Esophagus muscularis mucosa (tissue), 4 donors: ENCODE measurements at regions of chrX and their contacts with region 1.

Region 1: DNA sequence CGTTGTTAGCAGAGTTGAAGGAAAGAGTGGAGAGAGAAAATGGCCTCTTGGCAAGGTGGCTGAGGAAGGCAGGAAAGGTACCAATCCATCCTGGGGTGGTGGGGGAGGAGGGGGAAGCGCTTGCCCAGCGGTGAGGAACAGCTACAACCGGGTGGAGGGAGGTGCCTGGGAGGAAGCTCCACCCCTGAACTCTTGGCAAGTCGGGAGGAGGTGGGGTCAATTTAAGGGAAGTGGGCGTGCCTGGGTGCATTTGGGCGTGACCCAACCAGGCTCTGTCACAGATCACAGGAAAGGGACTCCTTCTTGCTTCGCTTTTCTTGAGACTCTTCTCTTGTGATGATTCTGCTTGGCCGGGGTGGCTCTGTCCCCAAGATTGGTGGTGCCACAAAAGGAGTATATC is 41.7 kb downstream of the BCORL1 start:
- DNase-seq: peak; percentile 92
- H3K4me3 ChIP-seq: no peak overlapping the region
- H3K27ac ChIP-seq: peak overlapping the region in 2 of 4 donors; percentile 18 to 34
- H3K4me1 ChIP-seq: peaks cover 4 to 20% (median 17%) of the 10 kb centered on the region in 4 donors
- H3K27me3 ChIP-seq: no peaks in the 10 kb centered on the region
- CTCF ChIP-seq: no peak
- EP300 ChIP-seq: no peak
- POLR2A ChIP-seq: no peak

Region 2: GRCh38 chrX:129925305-129926092 is 98.6 kb before region 1 on chrX:
- intact Hi-C with region 1: loop called (anchors 10 kb)
- DNase-seq: no peak
- H3K4me3 ChIP-seq: no peak overlapping the region
- H3K27ac ChIP-seq: no peak overlapping the region
- H3K4me1 ChIP-seq: peaks cover 0 to 5% (median 2%) of the 10 kb centered on the region in 4 donors
- H3K27me3 ChIP-seq: no peaks in the 10 kb centered on the region
- CTCF ChIP-seq: peak; percentile 54 to 61 (median 58)
- EP300 ChIP-seq: no peak
- POLR2A ChIP-seq: no peak

Region 3: GRCh38 chrX:129945146-129945545 is 79.0 kb before region 1 on chrX:
- intact Hi-C with region 1: no loop called
- DNase-seq: no peak
- H3K4me3 ChIP-seq: no peak overlapping the region
- H3K27ac ChIP-seq: no peak overlapping the region
- H3K4me1 ChIP-seq: no peaks in the 10 kb centered on the region
- H3K27me3 ChIP-seq: no peaks in the 10 kb centered on the region
- CTCF ChIP-seq: no peak
- EP300 ChIP-seq: no peak
- POLR2A ChIP-seq: no peak

Region 4: DNA sequence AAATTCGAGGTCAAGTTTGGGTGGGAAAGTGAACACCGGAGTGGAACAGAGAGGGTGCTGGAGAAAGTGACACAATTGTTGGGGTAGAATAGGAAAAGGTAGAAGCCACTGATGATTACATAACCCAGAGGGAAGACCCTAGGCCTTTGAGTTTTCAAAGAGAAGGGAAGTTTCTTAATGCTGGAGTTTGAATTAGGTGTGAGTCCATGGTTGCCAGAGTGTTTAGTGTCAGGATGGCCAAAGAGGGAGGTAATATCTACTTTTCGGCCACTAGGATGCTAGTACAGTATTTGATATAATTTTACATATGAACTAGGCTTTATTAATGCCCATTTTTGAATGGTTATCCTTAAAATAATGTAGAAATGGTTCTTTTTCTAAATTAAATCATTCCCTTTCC is 36.3 kb before region 1 on chrX:
- intact Hi-C with region 1: loop called (anchors 5 kb)
- DNase-seq: no peak
- H3K4me3 ChIP-seq: no peak overlapping the region
- H3K27ac ChIP-seq: no peak overlapping the region
- H3K4me1 ChIP-seq: peaks cover 0 to 19% (median 18%) of the 10 kb centered on the region in 4 donors
- H3K27me3 ChIP-seq: no peaks in the 10 kb centered on the region
- CTCF ChIP-seq: no peak
- EP300 ChIP-seq: no peak
- POLR2A ChIP-seq: no peak

Region 5: DNA sequence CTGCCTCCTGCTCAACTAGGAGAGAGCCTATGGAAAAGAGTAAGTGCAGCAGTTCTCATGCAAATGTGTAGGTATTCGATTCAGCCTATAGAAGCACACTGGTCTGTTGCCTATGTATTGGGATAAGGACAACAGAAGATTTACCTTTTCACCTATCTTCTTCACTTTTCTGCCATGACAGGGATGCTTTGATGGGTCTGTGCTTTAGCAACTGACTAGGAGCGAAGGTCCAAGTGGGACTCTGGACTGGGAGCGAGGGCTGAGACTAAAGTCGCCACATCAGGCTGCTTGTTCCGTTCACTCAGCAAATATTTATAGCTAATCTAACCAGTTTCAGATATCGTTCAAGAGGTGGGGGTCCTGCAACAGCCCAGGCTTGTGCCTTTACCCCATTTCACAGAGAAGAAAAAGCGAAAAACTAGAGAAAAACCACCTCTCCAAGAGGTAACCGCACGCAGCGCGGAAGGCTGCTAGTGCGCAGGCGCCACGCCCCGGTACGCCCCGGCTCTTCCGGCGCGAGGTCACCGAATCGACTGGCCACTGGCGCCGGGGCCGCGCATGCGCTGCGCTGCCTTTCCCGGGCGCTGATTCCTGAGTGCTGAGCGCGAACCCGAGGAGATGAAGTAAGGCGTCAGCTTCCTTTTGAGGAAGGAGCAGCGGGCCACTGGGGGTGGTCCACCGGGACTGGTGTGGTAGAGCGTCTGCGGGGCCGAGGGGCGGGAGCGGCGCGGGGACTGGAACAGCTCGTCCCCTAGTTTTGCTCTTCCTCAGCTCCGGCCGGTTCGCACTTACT is 377.5 kb after region 1 on chrX and contains the start of gene RBMX2:
- intact Hi-C with region 1: no loop called
- DNase-seq: no peak
- H3K4me3 ChIP-seq: peak within 1 kb of the TSS; percentile 63 to 78 (median 68)
- H3K27ac ChIP-seq: peak within 1 kb of the TSS; percentile 73 to 85 (median 82)
- H3K4me1 ChIP-seq: peaks cover 0 to 23% (median 19%) of the 10 kb centered on the region in 4 donors
- H3K27me3 ChIP-seq: no peaks in the 10 kb centered on the region
- CTCF ChIP-seq: no peak
- EP300 ChIP-seq: no peak
- POLR2A ChIP-seq: no peak
- total RNA-seq, gene RBMX2: 14.2 to 20.6 (median 17.6) TPM